Calu3 (cell line): ENCODE measurements at regions of chr6 and their contacts with region 1.

Region 1: DNA sequence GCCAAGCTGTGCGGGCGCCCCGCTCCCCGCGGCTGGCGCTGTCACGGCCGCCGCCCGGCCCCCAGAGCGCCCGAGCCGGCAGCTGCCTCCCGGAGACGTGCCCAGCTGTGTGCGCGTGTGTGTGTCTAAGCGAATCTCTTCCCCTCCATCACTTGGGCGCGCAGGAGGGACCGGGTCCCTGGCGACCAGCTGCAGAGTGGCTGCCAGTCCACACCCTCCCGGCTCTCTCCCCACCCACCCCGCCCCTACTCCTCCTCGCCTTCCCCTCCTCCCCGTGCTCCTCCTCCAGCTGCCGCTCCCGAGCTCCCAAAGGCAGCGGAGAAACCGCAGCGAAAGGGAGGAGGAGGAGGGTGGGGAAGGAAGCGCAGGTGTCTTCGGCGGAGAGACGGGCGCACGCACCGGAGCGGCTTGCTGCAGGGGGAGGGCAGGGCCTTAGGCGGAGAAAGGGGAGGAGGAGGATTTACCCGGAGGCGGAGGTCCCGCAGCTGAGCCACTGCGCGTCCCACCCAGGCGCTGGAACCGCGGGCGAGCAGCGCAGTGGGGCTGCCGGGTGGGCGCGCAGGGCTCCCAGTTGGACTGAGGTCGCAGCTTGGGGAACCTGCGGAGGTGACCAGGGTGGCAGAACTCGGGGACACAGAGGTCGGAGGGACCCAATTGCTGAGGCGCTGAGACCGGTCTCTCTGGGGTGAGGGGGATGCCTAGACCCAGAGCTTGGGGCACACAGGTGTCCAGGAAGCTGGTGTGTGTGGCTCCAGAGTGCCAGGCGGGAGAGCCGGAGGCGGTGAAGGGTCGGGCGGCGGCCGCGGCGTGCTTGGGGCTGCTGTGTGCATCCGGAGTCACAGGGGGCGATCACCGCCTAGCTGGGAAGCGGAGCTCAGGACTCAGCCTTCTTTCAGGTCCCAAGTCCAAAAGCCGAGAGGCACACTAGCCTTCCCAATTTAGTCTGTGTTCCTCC is at the start of gene HS3ST5:
- DNase-seq: peak; percentile 85
- H3K4me3 Mint-ChIP-seq: peak within 1 kb of the TSS; percentile 74
- H3K27ac Mint-ChIP-seq: peak within 1 kb of the TSS; percentile 20
- H3K4me1 Mint-ChIP-seq: peaks cover 39% of the 10 kb centered on the region
- H3K27me3 Mint-ChIP-seq: no peaks in the 10 kb centered on the region
- CTCF ChIP-seq: peak; percentile 53
- total RNA-seq, gene HS3ST5: 0.40 and 0.66 TPM in 2 replicates

Region 2: DNA sequence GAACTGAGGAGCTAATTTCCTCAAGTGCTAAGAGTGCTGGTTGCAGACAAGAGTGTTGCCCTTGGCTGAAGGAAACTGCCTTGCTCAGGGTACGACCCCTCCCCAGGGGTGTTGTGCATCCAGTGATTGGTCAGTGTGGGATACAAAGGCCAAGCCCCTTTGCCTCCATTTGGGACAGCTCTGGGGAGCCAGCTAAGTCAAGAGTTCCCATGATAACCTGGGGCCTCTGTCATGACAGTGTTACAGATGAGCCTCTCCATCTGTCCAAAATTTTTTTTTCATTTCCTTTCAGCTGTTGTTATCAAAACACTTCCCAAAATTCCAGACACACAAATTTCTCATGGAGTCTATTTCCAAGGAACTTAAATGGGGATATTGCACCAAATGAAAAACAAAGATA is 93.6 kb before region 1 on chr6:
- CTCF ChIA-PET with region 1: no interaction called
- intact Hi-C with region 1: no loop called
- DNase-seq: no peak
- H3K4me3 Mint-ChIP-seq: no peak overlapping the region
- H3K27ac Mint-ChIP-seq: no peak overlapping the region
- H3K4me1 Mint-ChIP-seq: no peaks in the 10 kb centered on the region
- H3K27me3 Mint-ChIP-seq: no peaks in the 10 kb centered on the region
- CTCF ChIP-seq: no peak

Region 3: DNA sequence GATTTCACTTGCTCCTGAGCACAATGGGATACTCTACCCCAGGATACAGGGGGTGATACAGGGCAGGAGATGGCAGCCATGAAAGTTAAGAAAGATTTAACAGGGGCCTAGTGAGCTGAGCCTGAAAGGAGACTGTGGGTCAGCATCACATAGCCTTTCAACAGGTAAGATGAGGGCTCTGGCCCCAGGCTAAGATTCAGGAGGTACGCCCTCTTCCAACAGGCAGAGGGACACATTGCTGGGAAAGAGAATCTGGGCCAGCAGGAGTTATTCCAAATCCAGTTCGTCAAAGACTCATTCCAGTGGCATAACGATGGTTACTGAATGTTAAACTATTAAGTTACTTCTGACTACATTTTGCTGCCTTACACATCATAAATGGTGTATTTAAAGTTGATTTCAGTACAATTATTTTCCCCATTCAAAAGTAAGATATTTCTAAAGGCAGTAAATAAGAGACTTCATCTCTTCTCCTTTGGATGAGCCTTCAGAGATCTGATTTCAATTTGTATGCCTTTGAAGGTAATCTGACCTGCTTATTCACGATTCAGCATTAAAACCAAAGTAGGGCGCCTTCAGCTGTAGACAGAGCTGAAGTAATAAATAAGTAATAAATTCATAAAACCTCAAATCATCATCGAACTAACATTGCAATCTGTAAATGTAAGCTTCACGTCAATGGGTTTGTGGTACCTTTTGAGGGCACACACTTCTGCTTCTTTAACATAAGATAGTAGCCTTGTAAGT is 62.7 kb before region 1 on chr6:
- CTCF ChIA-PET with region 1: interaction called, 13 read pairs
- intact Hi-C with region 1: no loop called
- DNase-seq: no peak
- H3K4me3 Mint-ChIP-seq: no peak overlapping the region
- H3K27ac Mint-ChIP-seq: no peak overlapping the region
- H3K4me1 Mint-ChIP-seq: no peaks in the 10 kb centered on the region
- H3K27me3 Mint-ChIP-seq: no peaks in the 10 kb centered on the region
- CTCF ChIP-seq: no peak

Region 4: GRCh38 chr6:114364289-114364688 is 21.2 kb after region 1 on chr6:
- CTCF ChIA-PET with region 1: interaction called, 11 read pairs
- intact Hi-C with region 1: no loop called
- DNase-seq: peak; percentile 46
- H3K4me3 Mint-ChIP-seq: peak overlapping the region; percentile 30
- H3K27ac Mint-ChIP-seq: peak overlapping the region; percentile 82
- H3K4me1 Mint-ChIP-seq: peaks cover 35% of the 10 kb centered on the region
- H3K27me3 Mint-ChIP-seq: no peaks in the 10 kb centered on the region
- CTCF ChIP-seq: no peak

Region 5: DNA sequence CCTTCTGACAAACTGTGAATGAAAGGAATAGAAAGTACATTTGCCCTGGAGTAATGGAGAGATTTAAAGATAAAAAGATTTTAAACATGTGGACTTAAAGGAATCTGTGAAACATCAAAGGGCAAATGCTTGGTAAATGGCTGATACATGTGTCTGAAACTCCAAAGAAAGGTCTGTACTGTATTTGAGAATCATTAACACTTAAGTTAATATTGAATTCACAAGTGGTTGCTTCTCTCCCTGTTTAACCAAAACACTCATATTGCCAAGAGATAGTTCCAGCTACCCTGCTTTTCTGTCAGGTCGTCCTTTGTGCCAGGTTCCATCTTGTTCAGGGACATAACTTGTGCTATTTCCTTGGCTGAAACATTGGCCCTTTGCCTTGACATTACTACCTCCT is 171.1 kb after region 1 on chr6:
- CTCF ChIA-PET with region 1: no interaction called
- intact Hi-C with region 1: loop called (anchors 10 kb)
- DNase-seq: no peak
- H3K4me3 Mint-ChIP-seq: no peak overlapping the region
- H3K27ac Mint-ChIP-seq: no peak overlapping the region
- H3K4me1 Mint-ChIP-seq: no peaks in the 10 kb centered on the region
- H3K27me3 Mint-ChIP-seq: no peaks in the 10 kb centered on the region
- CTCF ChIP-seq: no peak

Region 6: GRCh38 chr6:114648847-114649246 is 305.7 kb after region 1 on chr6:
- CTCF ChIA-PET with region 1: no interaction called
- intact Hi-C with region 1: loop called (anchors 5 kb)
- DNase-seq: peak; percentile 4
- H3K4me3 Mint-ChIP-seq: peak overlapping the region; percentile 15
- H3K27ac Mint-ChIP-seq: peak overlapping the region; percentile 53
- H3K4me1 Mint-ChIP-seq: peaks cover 47% of the 10 kb centered on the region
- H3K27me3 Mint-ChIP-seq: no peaks in the 10 kb centered on the region
- CTCF ChIP-seq: no peak

Region 7: DNA sequence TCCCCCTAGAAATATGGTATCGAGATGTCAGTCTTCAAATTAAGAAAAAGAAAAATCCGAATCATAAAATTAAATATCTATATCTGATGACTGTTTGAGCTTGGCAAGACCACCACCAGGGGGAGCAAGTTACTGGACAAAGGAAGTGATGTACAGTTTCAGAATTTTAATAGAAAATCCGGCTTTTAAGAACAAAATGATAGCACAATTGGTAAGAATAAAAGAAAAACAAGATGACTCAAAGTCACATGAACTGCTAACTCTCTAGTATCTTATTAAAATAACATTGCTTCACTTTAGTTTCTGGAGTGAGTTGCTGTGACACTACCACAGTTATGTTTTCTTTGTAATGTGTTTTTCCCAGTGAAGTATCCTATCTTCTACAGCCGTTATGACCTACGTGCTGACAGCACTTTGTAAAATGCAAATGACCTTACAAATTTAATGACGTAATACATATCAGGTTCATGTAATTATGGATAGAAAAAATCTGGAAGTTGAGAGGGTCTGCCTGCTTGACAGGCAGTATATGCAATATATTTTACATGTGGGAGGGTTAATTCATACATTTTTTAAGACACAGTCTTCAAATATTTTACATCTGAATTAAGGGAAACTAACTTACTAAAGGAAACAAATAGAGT is 405.0 kb after region 1 on chr6:
- CTCF ChIA-PET with region 1: no interaction called
- intact Hi-C with region 1: loop called (anchors 5 kb)
- DNase-seq: peak; percentile 76
- H3K4me3 Mint-ChIP-seq: no peak overlapping the region
- H3K27ac Mint-ChIP-seq: no peak overlapping the region
- H3K4me1 Mint-ChIP-seq: no peaks in the 10 kb centered on the region
- H3K27me3 Mint-ChIP-seq: no peaks in the 10 kb centered on the region
- CTCF ChIP-seq: peak; percentile 72